Right cardiac atrium (tissue), 5 donors: ENCODE measurements at regions of chr18 and their contacts with region 1.

Region 1: DNA sequence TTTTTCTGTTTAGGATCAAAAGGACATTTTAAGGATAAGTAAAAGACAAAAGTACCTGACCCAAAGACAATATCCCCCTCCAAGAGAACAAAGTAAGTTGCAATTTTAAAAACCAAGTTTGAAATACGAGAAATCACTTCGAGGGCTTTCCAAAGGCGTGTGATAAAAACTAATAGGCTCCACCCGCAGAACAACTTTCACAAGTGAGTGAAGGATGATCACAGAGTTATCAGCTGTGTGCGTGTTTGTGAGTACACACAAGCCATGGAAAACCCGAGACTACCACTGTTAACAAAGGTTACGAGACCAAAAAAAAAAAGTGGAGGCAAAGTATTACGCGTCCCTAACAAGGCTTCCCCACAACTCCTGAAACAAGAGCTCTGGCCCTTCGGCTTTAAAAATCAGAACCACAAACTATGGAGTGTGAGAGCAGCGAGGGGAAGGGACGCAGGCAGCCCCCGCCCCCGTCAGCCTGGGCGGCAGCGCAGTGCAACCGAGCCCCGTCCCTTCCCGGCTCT is 719 bp downstream of the SMAD2 start:
- DNase-seq: no peak
- ATAC-seq: peak; percentile 0 to 12
- H3K4me3 ChIP-seq: peak overlapping the region; percentile 85
- H3K27ac ChIP-seq: peak overlapping the region; percentile 93
- H3K4me1 ChIP-seq: no peaks in the 10 kb centered on the region
- H3K27me3 ChIP-seq: no peaks in the 10 kb centered on the region

Region 2: DNA sequence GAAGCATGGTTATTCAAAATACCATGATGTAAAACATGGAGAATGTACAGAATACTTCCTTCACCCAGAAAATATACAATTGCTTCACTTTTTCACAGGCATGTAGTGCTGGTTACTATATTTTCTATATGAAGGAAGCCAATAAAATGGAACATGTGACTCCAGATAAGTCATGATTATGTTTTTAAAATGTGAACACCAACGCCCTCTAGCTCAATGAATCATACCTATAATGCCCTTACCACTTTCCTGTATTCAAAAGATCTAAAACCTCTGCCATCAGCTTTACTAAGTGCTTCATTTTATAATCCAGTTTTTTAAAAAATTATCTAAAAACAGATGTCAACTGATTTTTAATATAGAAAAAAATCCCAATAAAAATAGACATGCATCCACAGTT is 59.1 kb before region 1 on chr18:
- intact Hi-C with region 1: loop called in 1 of 4 experiments (anchors 10 kb)
- DNase-seq: no peak
- ATAC-seq: no peak
- H3K4me3 ChIP-seq: no peak overlapping the region
- H3K27ac ChIP-seq: no peak overlapping the region
- H3K4me1 ChIP-seq: peaks cover 8% of the 10 kb centered on the region
- H3K27me3 ChIP-seq: no peaks in the 10 kb centered on the region